ENCODE measurements at regions of chr11 and their contacts with region 1.

Region 1: GRCh38 chr11:75204685-75205563 is 35.6 kb upstream of the TPBGL start:
- DNase-seq: peak; percentile 94

Region 2: GRCh38 chr11:75100314-75100713 is 104.6 kb before region 1 on chr11:
- in situ Hi-C with region 1: loop called (anchors 25 kb)
- DNase-seq: no peak

Region 3: GRCh38 chr11:75280227-75280701 is 75.3 kb after region 1 on chr11:
- in situ Hi-C with region 1: no loop called
- DNase-seq: peak; percentile 86